ENCODE measurements at regions of chrX and their contacts with region 1.

Region 1: DNA sequence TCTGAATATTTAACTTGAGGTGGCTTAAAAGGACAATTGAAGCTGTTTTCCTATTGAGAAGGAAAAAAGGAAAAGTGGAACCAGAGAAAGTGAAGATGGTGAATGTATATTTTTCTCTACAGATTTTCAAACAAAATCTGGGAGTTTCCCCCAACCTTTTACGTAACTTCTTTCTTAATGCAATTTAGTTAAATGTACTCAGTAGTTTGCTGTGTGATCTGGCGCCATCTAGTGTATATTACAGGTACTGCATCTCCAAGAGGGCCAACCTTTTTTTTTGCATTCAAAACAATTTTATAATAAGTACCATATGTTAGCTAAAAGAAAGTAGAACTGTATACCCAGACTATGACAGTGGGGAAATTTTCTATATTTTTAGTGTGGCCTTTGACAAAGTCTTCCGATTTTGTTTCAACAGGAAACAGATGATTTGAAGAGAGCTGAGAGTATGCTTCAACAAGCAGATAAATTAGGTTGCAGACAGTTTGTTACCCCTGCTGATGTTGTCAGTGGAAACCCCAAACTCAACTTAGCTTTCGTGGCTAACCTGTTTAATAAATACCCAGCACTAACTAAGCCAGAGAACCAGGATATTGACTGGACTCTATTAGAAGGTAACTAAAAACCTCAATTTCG is 82.0 kb downstream of the PLS3 start:
- DNase-seq: peak in 1 of 2 donors; percentile 25
- H3K4me3 ChIP-seq: no peak overlapping the region
- H3K27ac ChIP-seq: peak overlapping the region; percentile 60 to 70
- H3K4me1 ChIP-seq: peaks cover 0 to 48% (median 0%) of the 10 kb centered on the region in 4 donors
- H3K27me3 ChIP-seq: no peaks in the 10 kb centered on the region
- CTCF ChIP-seq: peak; percentile 83 to 85

Region 2: DNA sequence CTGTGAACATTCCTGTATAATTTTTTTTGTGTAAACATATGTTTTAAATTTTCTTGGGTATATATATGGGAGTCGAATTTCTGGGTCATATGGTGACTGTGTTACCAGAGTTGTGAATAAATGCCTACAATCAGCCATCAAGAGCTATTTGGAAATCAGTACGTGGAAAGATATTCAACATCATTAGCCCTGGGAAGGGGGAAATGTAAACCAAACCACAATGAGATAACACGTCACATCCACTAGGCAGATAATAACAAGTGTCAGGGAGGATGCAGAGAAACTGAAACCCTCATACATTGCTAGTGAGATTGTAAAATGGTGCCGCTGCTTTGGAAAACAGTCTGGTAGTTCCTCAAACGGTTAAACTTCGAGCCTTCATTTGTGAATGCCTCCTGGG is 309.6 kb before region 1 on chrX:
- intact Hi-C with region 1: loop called (anchors 2 kb)
- DNase-seq: no peak
- H3K4me3 ChIP-seq: no peak overlapping the region
- H3K27ac ChIP-seq: peak overlapping the region; percentile 81 to 82
- H3K4me1 ChIP-seq: peaks cover 0 to 54% (median 5%) of the 10 kb centered on the region in 4 donors
- H3K27me3 ChIP-seq: no peaks in the 10 kb centered on the region
- CTCF ChIP-seq: no peak

Region 3: GRCh38 chrX:116417214-116417613 is 774.2 kb after region 1 on chrX:
- intact Hi-C with region 1: no loop called
- DNase-seq: no peak
- H3K4me3 ChIP-seq: no peak overlapping the region
- H3K27ac ChIP-seq: no peak overlapping the region
- H3K4me1 ChIP-seq: no peaks in the 10 kb centered on the region
- H3K27me3 ChIP-seq: no peaks in the 10 kb centered on the region
- CTCF ChIP-seq: no peak

Measured in tibial artery (tissue), 4 donors.